HEK293T (cell line): ENCODE measurements at regions of chr7 and their contacts with region 1.

Region 1: GRCh38 chr7:6008668-6009611 is at the starts of genes AIMP2 and PMS2:
- DNase-seq: peak; percentile 88

Region 2: DNA sequence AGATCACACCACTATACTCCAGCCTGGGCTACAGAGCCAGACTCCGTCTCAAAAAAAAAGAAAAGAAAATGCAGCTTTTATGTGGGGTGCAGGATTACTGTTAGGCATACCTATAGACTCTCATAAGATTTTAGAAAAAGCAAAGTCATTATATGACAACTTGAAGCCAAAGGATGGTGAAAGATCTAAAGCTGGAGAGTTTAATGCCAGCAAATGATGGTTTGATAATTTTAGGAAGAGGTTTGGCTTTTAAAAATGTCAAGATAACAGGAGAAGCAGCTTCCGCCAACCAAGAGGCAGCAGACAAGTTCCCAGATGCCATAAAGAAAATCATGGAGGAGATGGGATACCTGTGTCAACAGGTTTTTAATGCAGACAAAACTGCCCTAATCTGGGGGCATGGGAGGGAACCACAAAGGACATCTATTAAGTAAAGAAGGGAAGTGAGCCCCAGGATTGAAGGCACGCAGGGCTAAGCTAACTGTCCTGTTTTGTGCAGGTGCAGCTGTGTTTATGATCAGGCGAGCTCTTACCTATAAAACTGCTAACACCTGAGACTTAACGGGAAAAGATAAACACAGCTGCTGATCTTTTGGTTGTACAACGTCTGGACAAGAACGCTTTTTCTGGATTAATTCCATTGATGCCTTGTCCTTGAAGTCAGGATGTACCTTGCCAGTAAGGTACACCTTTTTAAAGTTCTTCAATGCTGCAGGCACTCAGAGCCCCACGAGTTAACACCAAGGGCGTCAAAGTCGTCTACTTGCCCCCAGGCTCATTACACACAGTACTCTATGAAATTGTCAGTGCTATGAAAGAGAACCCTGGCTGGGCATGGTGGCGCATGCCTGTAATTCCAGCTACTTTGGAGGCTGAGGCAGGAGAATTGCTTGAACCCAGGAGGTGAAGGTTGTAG is 11.7 kb after region 1 on chr7:
- CTCF ChIA-PET with region 1: interaction called, 8 read pairs
- POLR2A ChIA-PET with region 1: interaction called, 13 read pairs
- DNase-seq: no peak

Region 3: GRCh38 chr7:6307762-6308161 is 298.8 kb after region 1 on chr7:
- CTCF ChIA-PET with region 1: no interaction called
- POLR2A ChIA-PET with region 1: no interaction called
- DNase-seq: no peak